ENCODE measurements at regions of chr16 and their contacts with region 1.

Region 1: GRCh38 chr16:49350265-49351095 is 23.1 kb upstream of the C16orf78 start:
- DNase-seq: peak; percentile 41 to 78 (median 57)
- ATAC-seq: peak in 3 of 4 donors; percentile 61 to 73 (median 62)
- H3K4me3 ChIP-seq: no peak overlapping the region
- H3K27ac ChIP-seq: no peak overlapping the region
- H3K4me1 ChIP-seq: peaks cover 0 to under 1% (median 0%) of the 10 kb centered on the region in 12 donors
- H3K27me3 ChIP-seq: peaks cover 0 to 32% (median 13%) of the 10 kb centered on the region in 9 donors
- CTCF ChIP-seq: peak; percentile 68 to 89 (median 82)
- POLR2A ChIP-seq: no peak

Region 2: GRCh38 chr16:48687421-48688038 is 663.0 kb before region 1 on chr16:
- intact Hi-C with region 1: loop called (anchors 1 to 2 kb)
- DNase-seq: peak; percentile 27 to 63 (median 42)
- ATAC-seq: peak in 3 of 4 donors; percentile 81 to 84 (median 82)
- H3K4me3 ChIP-seq: no peak overlapping the region
- H3K27ac ChIP-seq: no peak overlapping the region
- H3K4me1 ChIP-seq: peaks cover 0 to 5% (median 0%) of the 10 kb centered on the region in 12 donors
- H3K27me3 ChIP-seq: no peaks in the 10 kb centered on the region
- CTCF ChIP-seq: peak; percentile 65 to 84 (median 73)
- POLR2A ChIP-seq: no peak

Region 3: DNA sequence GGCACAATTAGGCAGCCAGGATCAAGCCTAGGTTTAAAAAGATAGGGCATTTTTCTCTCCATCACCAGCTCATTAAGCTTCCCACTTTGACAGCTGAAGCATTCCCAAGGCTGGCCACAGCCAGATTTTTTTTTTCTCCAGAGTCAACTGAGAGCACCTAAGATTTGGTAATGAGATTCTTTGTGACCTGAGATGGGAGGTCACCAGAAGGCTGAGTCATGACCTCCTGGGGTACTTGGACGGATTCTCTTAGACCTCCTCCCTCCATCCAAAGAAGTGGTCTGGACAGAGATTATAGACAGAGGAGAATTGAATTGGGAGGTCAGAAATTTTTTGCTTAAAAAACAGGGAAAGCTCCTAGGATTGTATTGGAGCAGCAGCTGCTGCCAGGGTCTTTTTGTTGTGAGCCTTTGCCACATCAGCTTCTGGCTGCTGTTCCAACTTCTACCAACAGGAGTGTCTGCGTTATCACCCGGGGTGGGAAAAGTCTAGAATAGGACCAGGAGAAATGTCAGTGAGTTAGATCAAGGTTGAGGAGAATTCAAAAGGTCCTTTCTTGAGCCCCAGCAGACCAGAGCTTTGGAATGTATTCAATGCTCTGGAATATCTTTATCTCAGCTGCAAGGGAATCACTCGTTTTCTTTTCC is 519.3 kb before region 1 on chr16:
- intact Hi-C with region 1: loop called in 2 of 10 experiments (anchors 10 kb)
- DNase-seq: no peak
- ATAC-seq: no peak
- H3K4me3 ChIP-seq: no peak overlapping the region
- H3K27ac ChIP-seq: no peak overlapping the region
- H3K4me1 ChIP-seq: no peaks in the 10 kb centered on the region
- H3K27me3 ChIP-seq: peaks cover 0 to 22% (median 0%) of the 10 kb centered on the region in 9 donors
- CTCF ChIP-seq: peak in 6 of 12 donors; percentile 7 to 41 (median 23)
- POLR2A ChIP-seq: no peak

Region 4: GRCh38 chr16:48901712-48902374 is 448.6 kb before region 1 on chr16:
- intact Hi-C with region 1: loop called in 2 of 10 experiments (anchors 5 to 10 kb)
- DNase-seq: no peak
- ATAC-seq: no peak
- H3K4me3 ChIP-seq: no peak overlapping the region
- H3K27ac ChIP-seq: no peak overlapping the region
- H3K4me1 ChIP-seq: no peaks in the 10 kb centered on the region
- H3K27me3 ChIP-seq: peaks cover 0 to 33% (median 4%) of the 10 kb centered on the region in 9 donors
- CTCF ChIP-seq: peak in 1 of 12 donors; percentile 7
- POLR2A ChIP-seq: no peak

Region 5: DNA sequence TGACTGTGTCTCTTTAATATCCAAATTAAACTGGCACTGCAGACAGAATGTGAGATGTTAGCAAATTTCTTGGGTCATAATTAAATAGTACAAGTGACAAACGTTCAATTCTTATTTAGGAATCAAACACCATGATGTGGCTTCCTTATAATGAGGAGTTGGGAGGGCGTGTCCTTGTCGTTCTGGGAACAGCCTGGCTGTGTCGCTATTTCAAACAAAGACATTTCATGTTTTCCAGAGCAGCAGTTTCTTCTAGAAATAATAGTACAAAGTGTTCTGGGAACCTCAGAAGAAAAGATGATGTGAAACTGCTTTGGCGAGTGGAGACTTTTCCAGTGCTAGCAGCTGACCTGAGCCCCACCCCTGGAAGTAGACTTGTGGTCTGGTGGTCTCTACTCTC is 438.8 kb before region 1 on chr16:
- intact Hi-C with region 1: loop called in 6 of 10 experiments (anchors 2 to 10 kb)
- DNase-seq: no peak
- ATAC-seq: no peak
- H3K4me3 ChIP-seq: no peak overlapping the region
- H3K27ac ChIP-seq: no peak overlapping the region
- H3K4me1 ChIP-seq: no peaks in the 10 kb centered on the region
- H3K27me3 ChIP-seq: peaks cover 0 to 11% (median 0%) of the 10 kb centered on the region in 9 donors
- CTCF ChIP-seq: peak in 7 of 12 donors; percentile 19 to 40 (median 31)
- POLR2A ChIP-seq: no peak

Region 6: GRCh38 chr16:49330562-49331201 is 19.8 kb before region 1 on chr16:
- intact Hi-C with region 1: no loop called
- DNase-seq: no peak
- ATAC-seq: no peak
- H3K4me3 ChIP-seq: no peak overlapping the region
- H3K27ac ChIP-seq: no peak overlapping the region
- H3K4me1 ChIP-seq: no peaks in the 10 kb centered on the region
- H3K27me3 ChIP-seq: no peaks in the 10 kb centered on the region
- CTCF ChIP-seq: no peak
- POLR2A ChIP-seq: no peak

Region 7: DNA sequence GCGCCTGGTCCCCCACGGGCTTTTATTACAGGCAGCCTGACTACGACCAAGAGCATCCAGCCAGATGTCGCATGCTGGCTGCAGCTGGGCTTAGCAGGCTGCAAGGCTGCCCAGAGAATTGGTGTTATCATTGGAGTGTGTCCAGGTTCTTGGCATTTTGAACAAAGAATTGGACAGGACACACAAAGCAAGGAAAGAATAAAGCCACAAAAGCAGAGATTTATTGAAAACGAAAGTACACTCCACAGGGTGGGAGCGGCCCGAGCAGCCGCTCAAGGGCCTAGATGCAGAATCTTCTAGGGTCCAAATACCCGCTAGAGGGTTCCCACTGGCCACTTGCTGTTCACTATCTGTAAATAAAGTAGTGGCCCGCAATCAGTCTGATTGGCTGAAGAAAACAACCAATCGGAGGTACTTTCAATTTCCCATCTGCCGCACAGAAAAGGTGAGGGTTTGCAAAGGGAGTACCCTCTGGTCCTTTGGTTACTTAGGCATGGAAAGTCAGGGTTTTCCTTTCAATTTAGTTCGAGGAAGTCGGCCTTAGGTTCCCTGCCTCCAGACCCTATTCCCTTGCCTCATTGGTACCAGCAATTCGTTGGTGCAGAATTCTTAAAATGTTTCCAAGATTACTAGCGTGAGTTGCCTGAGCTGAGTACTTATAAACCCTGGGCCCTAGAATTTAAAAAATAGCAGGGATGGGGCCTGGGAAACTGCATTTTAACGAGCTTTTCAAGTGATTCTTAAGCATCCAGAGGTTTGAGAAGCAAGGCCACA is 636.1 kb after region 1 on chr16:
- intact Hi-C with region 1: no loop called
- DNase-seq: no peak
- ATAC-seq: peak in 1 of 4 donors; percentile 13
- H3K4me3 ChIP-seq: peak overlapping the region in 5 of 12 donors; percentile 24 to 34 (median 27)
- H3K27ac ChIP-seq: no peak overlapping the region
- H3K4me1 ChIP-seq: no peaks in the 10 kb centered on the region
- H3K27me3 ChIP-seq: no peaks in the 10 kb centered on the region
- CTCF ChIP-seq: no peak
- POLR2A ChIP-seq: no peak

Measured in heart left ventricle (tissue), 16 donors.